Activated CD4-positive, alpha-beta memory T cell treated with anti-CD3 and anti-CD28 coated beads for 36 hours (primary cell): ENCODE measurements at regions of chr2 and their contacts with region 1.

Region 1: DNA sequence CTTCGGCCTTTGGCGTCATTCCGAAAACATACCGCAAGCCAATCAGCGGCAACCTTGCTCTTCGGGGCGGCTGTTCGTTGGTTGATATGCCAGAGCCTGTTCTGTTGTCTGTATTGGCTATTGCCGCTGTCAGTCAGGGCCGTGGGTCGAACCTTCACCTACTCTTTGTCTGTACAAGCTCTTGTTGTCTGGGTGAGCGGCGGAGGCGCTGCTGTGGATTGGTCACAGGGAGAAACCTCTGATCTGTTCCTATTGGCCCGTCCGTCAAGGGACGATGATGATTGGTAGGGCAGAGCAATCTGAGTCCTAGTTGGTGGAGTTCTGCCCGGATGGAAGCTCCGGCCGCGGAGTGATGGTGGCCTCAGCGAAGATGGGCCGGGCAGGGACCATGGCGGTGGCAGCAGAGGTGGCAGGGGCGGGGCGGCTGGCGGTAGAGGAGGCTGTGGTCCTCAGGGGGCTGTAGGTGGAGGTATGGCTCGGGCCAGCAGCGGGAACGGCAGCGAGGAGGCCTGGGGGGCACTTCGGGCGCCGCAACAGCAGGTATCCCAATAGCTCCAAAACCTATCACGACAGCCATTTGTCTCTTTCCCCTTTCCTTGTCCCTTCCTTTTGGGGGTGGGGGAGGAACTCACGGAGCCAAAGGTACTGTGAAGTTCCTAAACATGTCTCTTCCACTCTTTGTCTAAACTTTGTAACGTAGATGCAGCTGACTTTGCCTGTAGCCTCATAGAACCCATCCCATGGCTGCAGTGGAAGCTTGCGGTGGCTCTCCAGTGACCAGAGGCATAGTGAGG is at the start of gene WBP1:
- DNase-seq: peak; percentile 100
- H3K4me3 Mint-ChIP-seq: peak within 1 kb of the TSS; percentile 87
- H3K27ac Mint-ChIP-seq: peak within 1 kb of the TSS; percentile 99
- H3K4me1 Mint-ChIP-seq: peaks cover 55% of the 10 kb centered on the region
- H3K27me3 Mint-ChIP-seq: peaks cover 2% of the 10 kb centered on the region
- total RNA-seq, gene WBP1: 32.9 to 35.9 TPM

Region 2: DNA sequence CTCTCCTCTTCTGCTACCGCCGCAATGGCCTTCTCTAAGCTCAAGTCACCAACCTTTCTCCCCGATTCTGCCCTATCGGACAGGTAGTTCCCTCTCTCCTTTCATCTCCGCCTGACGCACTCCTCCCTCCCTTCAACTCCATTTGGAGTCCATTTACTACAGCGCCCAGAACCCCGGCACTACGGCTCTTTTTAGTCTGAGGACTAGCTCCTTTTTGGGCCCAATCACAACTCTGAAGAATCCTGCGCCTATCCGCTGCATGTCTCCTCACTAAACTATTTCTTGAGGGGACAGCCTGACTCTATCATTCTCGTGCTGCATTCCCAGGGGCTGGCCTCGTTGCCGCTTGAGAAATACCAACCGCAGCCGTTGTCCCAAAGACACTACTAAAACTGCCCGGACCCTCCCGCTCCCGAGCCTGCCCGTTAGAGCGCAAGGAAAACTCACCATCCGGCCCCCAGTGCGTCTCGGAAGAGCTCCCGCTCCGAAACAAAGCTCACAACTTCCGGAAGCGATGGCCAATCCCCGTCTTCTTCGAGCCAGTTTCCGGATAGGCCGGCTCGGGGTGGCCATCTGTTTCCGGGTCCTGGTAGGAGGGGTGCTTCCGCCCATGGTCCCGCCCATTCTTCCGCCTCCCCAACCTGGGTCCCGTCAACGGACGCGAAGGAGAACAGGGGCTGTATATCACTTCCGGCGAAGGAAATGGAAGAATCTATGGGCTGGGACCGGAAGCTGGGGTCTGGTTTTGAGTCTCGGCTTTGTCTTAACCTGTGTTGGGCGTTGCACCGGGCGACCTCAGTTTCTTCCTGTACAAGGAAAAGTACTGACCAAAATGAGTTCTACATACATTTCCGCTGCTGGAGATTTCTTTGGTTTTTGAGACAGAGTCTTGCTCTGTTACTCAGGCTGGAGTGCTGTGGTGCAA is 721.2 kb before region 1 on chr2 and contains the start of gene TPRKB:
- CTCF ChIA-PET with region 1: no interaction called
- POLR2A ChIA-PET with region 1: no interaction called
- intact Hi-C with region 1: loop called (anchors 1 kb)
- DNase-seq: peak; percentile 98
- H3K4me3 Mint-ChIP-seq: peak within 1 kb of the TSS; percentile 93
- H3K27ac Mint-ChIP-seq: peak within 1 kb of the TSS; percentile 75
- H3K4me1 Mint-ChIP-seq: peaks cover 20% of the 10 kb centered on the region
- H3K27me3 Mint-ChIP-seq: no peaks in the 10 kb centered on the region
- total RNA-seq, gene TPRKB: 33.2 to 34.6 TPM

Region 3: GRCh38 chr2:74391580-74392448 is 66.5 kb before region 1 on chr2:
- CTCF ChIA-PET with region 1: interaction called, 5 read pairs
- POLR2A ChIA-PET with region 1: interaction called, 3 read pairs
- intact Hi-C with region 1: loop called (anchors 1 kb)
- DNase-seq: peak; percentile 95
- H3K4me3 Mint-ChIP-seq: peak overlapping the region; percentile 92
- H3K27ac Mint-ChIP-seq: peak overlapping the region; percentile 96
- H3K4me1 Mint-ChIP-seq: peaks cover 4% of the 10 kb centered on the region
- H3K27me3 Mint-ChIP-seq: no peaks in the 10 kb centered on the region

Region 4: GRCh38 chr2:74440378-74441169 is 17.8 kb before region 1 on chr2:
- CTCF ChIA-PET with region 1: interaction called, 12 read pairs
- POLR2A ChIA-PET with region 1: interaction called, 4 read pairs
- intact Hi-C with region 1: loop called (anchors 1 kb)
- DNase-seq: peak; percentile 69
- H3K4me3 Mint-ChIP-seq: no peak overlapping the region
- H3K27ac Mint-ChIP-seq: no peak overlapping the region
- H3K4me1 Mint-ChIP-seq: peaks cover 10% of the 10 kb centered on the region
- H3K27me3 Mint-ChIP-seq: peaks cover 23% of the 10 kb centered on the region

Region 5: DNA sequence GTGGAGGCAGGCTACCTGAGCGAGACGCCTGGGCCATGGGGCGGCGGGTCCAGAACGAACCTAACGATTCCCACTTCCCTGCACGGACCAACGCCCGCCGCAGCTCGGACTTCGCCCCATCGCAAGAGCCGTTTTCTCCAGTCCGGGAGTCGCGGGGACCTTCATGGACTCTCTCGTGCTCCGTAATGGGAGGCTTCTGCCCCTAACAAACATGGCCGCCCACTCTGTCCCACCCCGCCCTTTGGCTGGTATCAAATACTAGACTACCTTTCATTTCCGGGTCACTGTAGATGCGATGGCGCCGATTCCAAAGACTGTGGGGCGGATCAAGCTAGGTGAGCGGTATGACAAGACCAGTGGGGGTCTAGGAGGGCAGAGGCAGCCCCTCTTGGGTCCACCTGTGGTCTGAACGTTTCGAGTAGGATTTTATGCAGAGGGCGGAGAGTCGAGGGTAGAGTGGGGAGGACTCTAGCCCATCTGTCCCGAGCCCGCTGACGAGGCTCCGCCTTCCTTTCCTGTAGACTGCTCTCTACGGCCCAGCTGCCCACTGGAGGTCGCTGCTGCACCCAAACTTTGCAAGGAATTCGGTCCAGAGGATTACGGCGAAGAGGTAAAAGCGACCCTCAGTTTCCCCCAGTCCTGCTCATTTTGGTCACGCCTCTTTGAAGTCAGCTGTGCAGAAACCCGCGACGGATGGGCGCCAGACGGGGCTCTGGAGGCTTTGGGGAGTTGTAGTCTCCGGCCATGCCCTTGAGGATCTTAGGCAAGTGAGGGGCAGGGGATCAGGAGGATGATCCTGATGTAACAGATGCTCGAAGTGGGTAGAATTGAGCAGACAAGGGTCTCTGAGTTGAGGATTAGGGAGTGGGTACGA is 24.7 kb after region 1 on chr2 and contains the starts of genes CCDC142 and TTC31:
- CTCF ChIA-PET with region 1: interaction called, 25 read pairs
- POLR2A ChIA-PET with region 1: interaction called, 19 read pairs
- intact Hi-C with region 1: loop called (anchors 1 kb)
- DNase-seq: peak; percentile 96
- H3K4me3 Mint-ChIP-seq: peak within 1 kb of the TSS; percentile 100
- H3K27ac Mint-ChIP-seq: peak within 1 kb of the TSS; percentile 99
- H3K4me1 Mint-ChIP-seq: peaks cover 35% of the 10 kb centered on the region
- H3K27me3 Mint-ChIP-seq: no peaks in the 10 kb centered on the region
- total RNA-seq, gene CCDC142: 10.1 to 10.8 TPM
- total RNA-seq, gene TTC31: 27.3 to 29.1 TPM